Transverse colon (tissue), 4 donors: ENCODE measurements at regions of chr3 and their contacts with region 1.

Region 1: DNA sequence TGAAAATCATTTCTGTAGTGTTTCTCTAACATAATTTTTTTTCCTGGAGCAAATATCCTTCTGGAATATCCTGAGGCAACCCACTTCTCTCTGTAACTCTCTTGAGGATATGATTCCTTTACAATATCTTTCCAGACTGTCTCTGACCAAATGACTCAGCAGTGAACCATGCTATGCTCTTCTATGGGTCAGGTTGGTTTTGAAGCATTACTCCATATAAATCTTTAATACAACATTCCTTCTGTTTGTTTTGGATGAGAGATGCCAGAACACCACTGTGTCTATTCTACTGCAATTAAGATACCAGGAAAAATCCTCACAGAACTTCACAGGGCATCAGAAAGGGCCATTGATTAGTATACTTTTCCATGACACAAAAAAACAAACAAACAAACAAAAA is 626.4 kb upstream of the ZNF385D start:
- DNase-seq: no peak
- H3K4me3 ChIP-seq: no peak overlapping the region
- H3K27ac ChIP-seq: no peak overlapping the region
- H3K4me1 ChIP-seq: peaks cover 0 to 5% (median 2%) of the 10 kb centered on the region in 4 donors
- H3K27me3 ChIP-seq: peaks cover 12% of the 10 kb centered on the region
- CTCF ChIP-seq: no peak
- EP300 ChIP-seq: no peak
- POLR2A ChIP-seq: no peak

Region 2: DNA sequence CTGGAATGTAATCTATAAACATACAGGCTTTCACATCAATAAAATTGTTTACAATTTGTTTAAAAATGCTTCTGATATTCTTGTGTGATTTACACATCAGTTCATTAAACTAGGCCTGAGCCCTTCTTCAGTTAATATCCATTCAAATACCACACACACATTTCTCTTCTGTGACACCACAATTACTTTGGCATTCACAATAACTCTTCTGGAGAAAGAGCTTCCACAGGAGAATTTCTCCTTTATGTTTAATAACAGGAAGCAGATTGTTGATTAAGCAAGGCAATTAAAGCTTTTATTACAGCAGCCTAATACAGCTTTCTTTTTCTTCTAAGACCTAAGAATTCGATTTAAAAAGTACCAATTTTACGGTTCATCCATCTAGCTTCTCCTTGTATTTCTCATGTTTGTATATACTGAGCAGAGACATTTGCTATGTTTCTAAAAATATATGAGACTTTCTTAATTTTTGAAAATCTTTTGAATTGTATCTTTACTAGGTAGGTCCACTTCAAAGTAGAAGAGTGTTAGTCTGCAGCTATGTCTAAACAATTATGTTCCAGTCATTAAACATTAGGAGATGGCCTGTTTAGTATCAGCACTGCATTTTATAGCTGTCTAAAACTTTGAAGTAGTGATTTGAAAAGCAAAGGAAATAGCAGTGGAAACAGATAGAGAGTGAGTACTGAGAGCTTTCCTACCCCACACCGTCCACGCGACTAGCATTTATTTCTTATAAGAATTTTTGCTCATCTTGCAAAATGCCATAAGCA is 314.6 kb after region 1 on chr3:
- in situ Hi-C with region 1: no loop called
- intact Hi-C with region 1: no loop called
- DNase-seq: no peak
- H3K4me3 ChIP-seq: no peak overlapping the region
- H3K27ac ChIP-seq: no peak overlapping the region
- H3K4me1 ChIP-seq: peaks cover 0 to 6% (median 2%) of the 10 kb centered on the region in 4 donors
- H3K27me3 ChIP-seq: no peaks in the 10 kb centered on the region
- CTCF ChIP-seq: no peak
- EP300 ChIP-seq: no peak
- POLR2A ChIP-seq: no peak

Region 3: GRCh38 chr3:22779737-22780136 is 402.3 kb after region 1 on chr3:
- in situ Hi-C with region 1: no loop called
- intact Hi-C with region 1: no loop called
- DNase-seq: no peak
- H3K4me3 ChIP-seq: no peak overlapping the region
- H3K27ac ChIP-seq: no peak overlapping the region
- H3K4me1 ChIP-seq: no peaks in the 10 kb centered on the region
- H3K27me3 ChIP-seq: no peaks in the 10 kb centered on the region
- CTCF ChIP-seq: no peak
- EP300 ChIP-seq: no peak
- POLR2A ChIP-seq: no peak

Region 4: GRCh38 chr3:23239211-23240068 is 862.0 kb after region 1 on chr3:
- in situ Hi-C with region 1: no loop called
- intact Hi-C with region 1: no loop called
- DNase-seq: no peak
- H3K4me3 ChIP-seq: no peak overlapping the region
- H3K27ac ChIP-seq: no peak overlapping the region
- H3K4me1 ChIP-seq: peaks cover 0 to 11% (median 0%) of the 10 kb centered on the region in 4 donors
- H3K27me3 ChIP-seq: no peaks in the 10 kb centered on the region
- CTCF ChIP-seq: no peak
- EP300 ChIP-seq: no peak
- POLR2A ChIP-seq: no peak

Region 5: DNA sequence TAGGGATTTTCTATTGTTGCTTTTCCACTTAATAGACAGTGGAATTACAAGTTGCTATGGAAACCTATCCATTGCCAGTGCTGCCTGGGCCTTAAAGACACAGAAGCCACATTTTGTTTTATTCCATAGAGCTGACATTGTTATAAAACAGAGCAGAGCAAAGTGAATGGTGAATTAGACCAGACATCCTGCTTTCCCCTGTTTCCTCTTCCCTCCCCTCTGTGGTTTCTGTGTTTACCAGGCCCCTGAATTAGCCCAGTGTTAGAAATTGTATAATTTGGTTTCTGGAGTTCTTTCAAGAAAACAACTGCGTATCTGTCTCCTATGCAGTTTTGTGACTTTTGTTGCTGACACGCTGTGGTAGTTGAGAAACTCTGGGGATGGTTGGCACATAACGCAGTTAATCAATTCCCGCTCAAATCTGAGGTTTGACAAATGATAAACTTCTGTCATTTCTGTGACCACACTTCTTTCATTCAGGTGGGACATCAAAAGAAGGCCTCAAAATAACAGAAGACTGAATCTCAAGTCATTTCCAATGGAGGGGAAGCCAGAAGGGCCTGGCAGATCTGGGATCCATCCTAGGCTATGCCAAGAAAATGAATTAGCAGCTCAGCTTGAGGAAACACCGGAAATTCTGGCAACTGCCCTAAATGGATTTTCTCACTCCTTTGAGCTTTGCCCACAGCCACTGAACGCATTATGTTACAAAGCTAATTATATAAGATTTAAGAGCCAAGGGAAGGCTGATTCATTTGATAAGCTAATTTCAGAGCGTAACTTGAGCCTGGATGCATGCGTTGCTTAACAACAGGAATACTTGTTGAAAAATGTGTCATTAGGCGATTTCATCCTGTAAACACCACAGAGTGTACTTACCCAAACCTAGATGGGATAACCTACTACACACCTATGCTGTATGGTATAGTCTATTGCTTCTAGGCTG is 1614.5 kb after region 1 on chr3:
- in situ Hi-C with region 1: no loop called
- intact Hi-C with region 1: loop called (anchors 5 kb)
- DNase-seq: no peak
- H3K4me3 ChIP-seq: no peak overlapping the region
- H3K27ac ChIP-seq: peak overlapping the region; percentile 19 to 44 (median 34)
- H3K4me1 ChIP-seq: peaks cover 4 to 21% (median 4%) of the 10 kb centered on the region in 4 donors
- H3K27me3 ChIP-seq: no peaks in the 10 kb centered on the region
- CTCF ChIP-seq: no peak
- EP300 ChIP-seq: no peak
- POLR2A ChIP-seq: no peak